CD4-positive, alpha-beta memory T cell (primary cell): ENCODE measurements at regions of chr5 and their contacts with region 1.

Region 1: GRCh38 chr5:39578887-39579497 is 154.2 kb upstream of the DAB2 start:
- DNase-seq: peak in 4 of 5 donors; percentile 15 to 26 (median 19)
- H3K4me3 ChIP-seq: no peak overlapping the region
- H3K4me3 Mint-ChIP-seq: peak overlapping the region in 1 of 8 donors; percentile 32
- H3K27ac ChIP-seq: no peak overlapping the region
- H3K27ac Mint-ChIP-seq: no peak overlapping the region
- H3K4me1 ChIP-seq: peaks cover 10% of the 10 kb centered on the region
- H3K4me1 Mint-ChIP-seq: peaks cover 4 to 11% (median 6%) of the 10 kb centered on the region in 4 donors
- H3K27me3 ChIP-seq: no peaks in the 10 kb centered on the region
- H3K27me3 Mint-ChIP-seq: peaks cover 0 to 2% of the 10 kb centered on the region in 2 donors

Region 2: GRCh38 chr5:39714036-39714698 is 135.2 kb after region 1 on chr5:
- CTCF ChIA-PET with region 1: interaction called, 3 read pairs
- POLR2A ChIA-PET with region 1: no interaction called
- intact Hi-C with region 1: loop called (anchors 1 kb)
- DNase-seq: peak in 4 of 5 donors; percentile 38 to 47 (median 43)
- H3K4me3 ChIP-seq: no peak overlapping the region
- H3K4me3 Mint-ChIP-seq: no peak overlapping the region
- H3K27ac ChIP-seq: no peak overlapping the region
- H3K27ac Mint-ChIP-seq: no peak overlapping the region
- H3K4me1 ChIP-seq: no peaks in the 10 kb centered on the region
- H3K4me1 Mint-ChIP-seq: no peaks in the 10 kb centered on the region
- H3K27me3 ChIP-seq: no peaks in the 10 kb centered on the region
- H3K27me3 Mint-ChIP-seq: peaks cover 0 to 2% of the 10 kb centered on the region in 2 donors

Region 3: DNA sequence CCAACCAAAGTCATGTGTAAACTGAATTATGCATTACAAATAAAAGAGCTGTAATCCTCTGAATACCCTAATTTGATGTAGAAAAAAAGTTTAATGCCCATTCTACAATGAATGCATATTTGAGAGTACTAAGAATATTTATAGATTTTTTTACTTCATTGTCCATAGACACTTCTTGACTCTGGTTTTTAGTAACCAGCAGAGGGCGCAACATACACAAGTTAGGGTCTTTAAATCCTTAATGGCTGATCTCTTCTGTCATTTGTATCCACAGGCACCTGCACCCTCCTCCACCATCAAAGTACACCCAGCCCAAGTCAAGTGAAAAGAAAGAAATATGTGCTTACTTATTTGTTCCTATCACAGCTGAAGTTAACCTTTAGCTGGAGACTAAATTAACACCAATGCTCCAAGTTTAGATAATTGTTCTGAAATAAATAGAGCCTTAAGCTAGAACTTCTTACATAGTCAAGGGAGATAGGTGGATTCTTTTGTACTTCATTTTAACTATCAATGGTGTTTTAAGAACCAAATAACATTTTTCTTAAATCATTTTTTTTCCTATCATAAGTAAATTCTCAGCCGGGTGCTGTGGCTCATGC is 370.0 kb after region 1 on chr5:
- CTCF ChIA-PET with region 1: no interaction called
- POLR2A ChIA-PET with region 1: no interaction called
- intact Hi-C with region 1: loop called (anchors 5 kb)
- DNase-seq: peak; percentile 64 to 69 (median 66)
- H3K4me3 ChIP-seq: no peak overlapping the region
- H3K4me3 Mint-ChIP-seq: no peak overlapping the region
- H3K27ac ChIP-seq: no peak overlapping the region
- H3K27ac Mint-ChIP-seq: no peak overlapping the region
- H3K4me1 ChIP-seq: no peaks in the 10 kb centered on the region
- H3K4me1 Mint-ChIP-seq: peaks cover 0 to 5% (median 2%) of the 10 kb centered on the region in 4 donors
- H3K27me3 ChIP-seq: no peaks in the 10 kb centered on the region
- H3K27me3 Mint-ChIP-seq: no peaks in the 10 kb centered on the region

Region 4: GRCh38 chr5:40755407-40756365 is 1176.7 kb after region 1 on chr5 and contains the start of gene TTC33:
- CTCF ChIA-PET with region 1: no interaction called
- POLR2A ChIA-PET with region 1: no interaction called
- intact Hi-C with region 1: loop called (anchors 5 kb)
- DNase-seq: peak; percentile 90 to 97 (median 92)
- H3K4me3 ChIP-seq: peak within 1 kb of the TSS; percentile 93 to 95
- H3K4me3 Mint-ChIP-seq: no peak within 1 kb of the TSS
- H3K27ac ChIP-seq: peak within 1 kb of the TSS; percentile 90
- H3K27ac Mint-ChIP-seq: peak within 1 kb of the TSS in 1 of 7 donors; percentile 68
- H3K4me1 ChIP-seq: peaks cover 21% of the 10 kb centered on the region
- H3K4me1 Mint-ChIP-seq: peaks cover 8 to 29% (median 16%) of the 10 kb centered on the region in 4 donors
- H3K27me3 ChIP-seq: no peaks in the 10 kb centered on the region
- H3K27me3 Mint-ChIP-seq: no peaks in the 10 kb centered on the region
- total RNA-seq, gene TTC33: 15.2 to 16.2 TPM